Activated naive CD4-positive, alpha-beta T cell treated with anti-CD3 and anti-CD28 coated beads, Interleukin-2, amount 10 ng/mL, durations not matched to agents 7 days and 5 days (primary cell): ENCODE measurements at regions of chr16 and their contacts with region 1.

Region 1: DNA sequence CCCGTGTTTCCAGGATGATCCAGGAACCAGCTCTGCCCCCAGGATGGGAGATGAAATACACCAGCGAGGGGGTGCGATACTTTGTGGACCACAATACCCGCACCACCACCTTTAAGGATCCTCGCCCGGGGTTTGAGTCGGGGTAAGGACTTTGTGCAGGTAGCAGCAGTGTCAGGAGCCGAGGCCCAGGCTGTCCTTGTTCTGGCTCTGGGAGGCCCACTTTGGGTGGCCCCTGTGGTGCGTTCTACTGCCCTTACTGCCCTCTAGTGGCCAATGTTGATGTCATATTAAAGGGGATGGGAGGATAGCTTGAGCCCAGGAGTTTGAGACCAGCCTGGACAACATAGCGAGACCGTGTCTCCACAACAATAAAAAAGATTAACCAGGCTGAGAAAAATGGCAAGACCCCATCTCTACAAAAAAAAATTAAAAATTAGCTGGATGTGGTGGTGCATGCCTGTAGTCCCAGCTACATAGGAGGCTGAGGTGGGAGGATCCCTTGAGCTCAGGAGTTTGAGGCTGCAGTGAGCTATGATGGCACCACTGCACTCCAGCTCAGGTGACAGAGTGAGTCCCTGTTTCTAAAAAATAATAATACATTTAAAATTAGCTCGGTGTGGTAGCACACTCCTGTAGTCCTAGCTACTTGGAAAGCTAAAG is 20.9 kb upstream of the CLEC18A start:
- DNase-seq: peak; percentile 61
- H3K4me3 Mint-ChIP-seq: no peak overlapping the region
- H3K27ac Mint-ChIP-seq: no peak overlapping the region
- H3K4me1 Mint-ChIP-seq: no peaks in the 10 kb centered on the region
- H3K27me3 Mint-ChIP-seq: no peaks in the 10 kb centered on the region

Region 2: DNA sequence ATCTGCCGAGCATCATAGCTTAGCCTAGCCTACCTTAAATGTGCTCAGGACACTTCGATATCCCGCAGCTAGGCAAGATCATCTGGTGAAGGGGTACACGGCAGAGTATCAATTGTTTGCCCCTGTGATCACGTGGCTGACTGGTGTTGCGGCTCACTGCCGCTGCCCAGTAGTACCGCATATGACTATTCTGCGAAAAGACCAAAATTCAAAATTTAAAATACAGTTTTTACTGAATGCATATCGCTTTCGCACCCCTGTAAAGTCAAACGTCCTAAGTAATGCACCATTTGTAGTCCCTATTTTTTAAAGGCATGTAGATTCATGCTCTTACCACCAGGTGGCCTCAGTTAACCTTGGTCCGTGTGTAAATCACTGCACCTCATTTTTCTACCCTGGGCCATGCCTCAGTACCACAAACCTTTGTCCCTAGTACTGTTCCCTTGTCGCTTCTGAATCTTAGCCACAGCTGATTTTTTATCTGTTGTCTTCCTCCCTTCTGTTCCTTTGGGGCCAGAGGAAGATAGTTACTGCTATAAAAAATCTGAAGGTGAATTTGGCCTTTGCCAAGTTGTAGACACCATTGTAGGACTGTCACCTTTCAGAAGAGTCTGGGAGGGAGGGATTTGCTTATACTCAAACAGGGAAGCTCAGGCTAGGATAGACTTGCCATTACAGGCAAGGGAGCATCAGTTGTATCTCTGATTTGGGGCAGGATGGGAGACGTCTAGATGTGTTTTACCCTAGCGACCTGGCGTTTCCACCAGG is 133.7 kb before region 1 on chr16:
- CTCF ChIA-PET with region 1: interaction called, 29 read pairs
- DNase-seq: peak; percentile 34
- H3K4me3 Mint-ChIP-seq: no peak overlapping the region
- H3K27ac Mint-ChIP-seq: no peak overlapping the region
- H3K4me1 Mint-ChIP-seq: no peaks in the 10 kb centered on the region
- H3K27me3 Mint-ChIP-seq: no peaks in the 10 kb centered on the region

Region 3: GRCh38 chr16:69890114-69890891 is 39.9 kb before region 1 on chr16:
- CTCF ChIA-PET with region 1: no interaction called
- DNase-seq: no peak
- H3K4me3 Mint-ChIP-seq: no peak overlapping the region
- H3K27ac Mint-ChIP-seq: no peak overlapping the region
- H3K4me1 Mint-ChIP-seq: no peaks in the 10 kb centered on the region
- H3K27me3 Mint-ChIP-seq: no peaks in the 10 kb centered on the region

Region 4: DNA sequence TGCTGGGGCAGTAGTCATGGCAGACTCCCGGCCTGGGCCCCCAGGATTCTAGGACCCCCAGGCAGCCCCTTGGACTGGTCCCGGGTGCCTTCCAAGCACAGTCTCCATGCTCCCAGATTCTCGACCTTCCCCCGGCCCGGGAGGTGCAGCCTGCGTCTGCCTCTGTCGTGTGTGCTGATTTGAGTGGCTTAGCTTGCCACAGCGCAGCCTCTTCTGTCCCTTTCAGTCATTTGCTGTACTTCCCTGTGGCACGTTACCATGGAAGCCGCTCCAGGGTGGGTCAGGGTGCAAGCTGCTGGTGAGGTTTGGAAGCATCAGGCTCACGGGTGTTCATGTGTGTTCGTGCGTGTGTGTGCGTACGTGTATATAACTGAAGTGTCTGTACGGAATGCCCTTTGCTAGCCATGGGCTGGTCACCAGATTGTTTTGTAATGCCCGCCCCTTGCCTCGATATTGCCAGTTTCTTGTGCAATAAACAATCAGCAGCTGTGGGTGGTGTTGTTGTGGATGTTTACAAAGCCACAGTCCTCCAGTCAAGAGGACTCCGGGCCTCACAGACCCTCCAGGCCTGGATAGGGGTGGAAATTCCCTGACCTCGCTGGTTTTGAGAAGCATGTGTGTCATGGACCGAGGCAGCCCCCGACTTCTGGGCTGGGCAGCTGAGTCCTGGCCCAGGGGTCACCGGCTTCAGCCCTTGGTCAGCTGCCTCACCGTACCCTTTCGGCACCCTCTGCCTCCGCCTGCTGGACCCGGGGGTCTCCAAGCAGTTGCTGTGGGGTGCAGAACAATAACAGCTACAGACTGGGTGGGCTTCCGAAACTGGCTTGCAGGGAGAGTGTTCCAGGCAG is 11.2 kb after region 1 on chr16:
- CTCF ChIA-PET with region 1: interaction called, 11 read pairs
- DNase-seq: no peak
- H3K4me3 Mint-ChIP-seq: no peak overlapping the region
- H3K27ac Mint-ChIP-seq: no peak overlapping the region
- H3K4me1 Mint-ChIP-seq: no peaks in the 10 kb centered on the region
- H3K27me3 Mint-ChIP-seq: no peaks in the 10 kb centered on the region

Region 5: GRCh38 chr16:70162041-70162451 is 231.8 kb after region 1 on chr16:
- CTCF ChIA-PET with region 1: no interaction called
- DNase-seq: no peak
- H3K4me3 Mint-ChIP-seq: no peak overlapping the region
- H3K27ac Mint-ChIP-seq: no peak overlapping the region
- H3K4me1 Mint-ChIP-seq: no peaks in the 10 kb centered on the region
- H3K27me3 Mint-ChIP-seq: no peaks in the 10 kb centered on the region